ENCODE measurements at regions of chr20 and their contacts with region 1.

Region 1: DNA sequence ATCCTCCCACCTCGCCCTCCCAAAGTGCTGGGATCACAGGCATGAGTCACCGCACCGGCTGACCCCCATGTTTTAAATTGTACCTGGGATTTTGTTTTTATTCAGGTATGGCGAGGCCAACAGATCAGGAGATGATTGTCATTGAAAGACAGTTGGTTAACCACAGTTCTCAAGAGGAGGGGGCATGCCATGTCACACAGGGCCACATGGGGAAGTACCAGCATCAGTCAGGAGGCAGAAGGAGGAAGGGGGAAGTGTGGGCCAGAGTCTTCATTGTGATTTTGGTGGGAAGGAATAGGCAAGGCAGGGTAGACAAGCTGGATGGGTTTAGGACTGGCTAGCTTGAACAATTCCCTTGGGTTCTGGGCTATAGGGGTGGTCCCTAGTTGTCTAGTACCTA is 9.9 kb upstream of the MMP9 start:
- DNase-seq: no peak
- H3K4me3 ChIP-seq: no peak overlapping the region
- H3K27ac ChIP-seq: no peak overlapping the region
- H3K27me3 ChIP-seq: peaks cover 44% of the 10 kb centered on the region
- CTCF ChIP-seq: no peak

Region 2: DNA sequence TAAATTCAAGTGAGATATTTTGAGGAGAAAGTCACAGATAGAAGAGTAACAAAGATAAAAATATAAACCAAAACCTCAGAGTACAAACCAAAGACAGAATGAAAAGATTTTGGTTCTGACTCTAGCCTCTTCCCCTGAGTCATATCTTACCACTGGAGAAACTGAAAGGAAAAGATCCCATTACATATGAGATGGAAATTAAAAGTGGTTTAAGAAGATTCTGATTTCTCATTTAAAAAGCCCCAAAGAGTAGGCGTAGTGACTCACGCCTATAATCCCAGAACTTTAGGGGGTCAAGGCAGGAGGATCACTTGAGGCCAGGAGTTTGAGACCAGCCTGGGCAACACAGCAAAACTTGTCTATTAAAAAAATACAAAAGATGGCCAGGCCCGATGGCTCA is 246.0 kb before region 1 on chr20:
- CTCF ChIA-PET with region 1: no interaction called
- POLR2A ChIA-PET with region 1: interaction called, 10 read pairs
- DNase-seq: no peak
- H3K4me3 ChIP-seq: no peak overlapping the region
- H3K27ac ChIP-seq: no peak overlapping the region
- H3K27me3 ChIP-seq: no peaks in the 10 kb centered on the region
- CTCF ChIP-seq: no peak

Region 3: DNA sequence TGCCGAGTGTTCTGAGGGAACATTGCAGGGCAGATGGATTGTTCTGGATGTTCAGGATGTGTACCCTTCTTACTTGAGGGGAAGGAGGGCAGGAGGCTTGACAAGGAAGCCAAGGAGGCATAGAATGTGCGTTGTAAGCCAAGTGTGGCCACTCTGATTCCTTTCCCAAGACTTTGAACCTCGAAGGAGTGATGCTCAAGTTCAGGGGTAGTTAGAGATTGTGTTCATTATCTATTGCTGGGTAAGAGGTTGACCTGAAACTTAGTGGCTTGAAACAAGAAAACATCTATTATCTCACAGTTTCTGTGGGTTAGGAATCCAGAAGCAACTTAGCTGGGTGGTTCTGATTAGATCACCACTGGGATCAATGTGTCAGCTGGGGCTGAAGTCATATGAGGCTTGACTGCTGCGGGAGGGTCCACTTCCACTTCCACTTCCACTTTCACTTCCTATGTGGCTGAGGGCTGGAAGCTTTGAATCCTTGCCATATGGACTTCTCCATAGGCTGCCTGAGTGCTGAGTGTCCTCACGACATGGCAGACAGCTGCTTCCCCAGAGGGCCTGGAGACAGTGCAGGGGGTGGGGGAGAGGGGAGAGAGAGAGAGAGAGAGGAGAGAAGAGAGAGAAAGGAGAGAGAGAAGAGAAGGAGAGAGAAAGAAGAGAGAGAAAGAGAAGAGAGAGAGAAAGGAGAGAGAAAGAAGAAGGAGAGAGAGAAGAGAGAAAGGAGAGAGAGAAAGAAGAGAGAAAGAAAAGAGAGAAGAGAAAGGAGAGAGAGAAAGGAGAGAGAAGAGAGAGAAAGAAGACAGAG is 112.5 kb after region 1 on chr20:
- CTCF ChIA-PET with region 1: no interaction called
- POLR2A ChIA-PET with region 1: no interaction called
- DNase-seq: no peak
- H3K4me3 ChIP-seq: no peak overlapping the region
- H3K27ac ChIP-seq: no peak overlapping the region
- H3K27me3 ChIP-seq: peaks cover 31% of the 10 kb centered on the region
- CTCF ChIP-seq: no peak